Mammary epithelial cell (primary cell): ENCODE measurements at regions of chr11 and their contacts with region 1.

Region 1: GRCh38 chr11:25350899-25351803 is 854.3 kb downstream of the LUZP2 start:
- DNase-seq: no peak
- H3K4me3 ChIP-seq: no peak overlapping the region
- H3K27ac ChIP-seq: no peak overlapping the region
- H3K4me1 ChIP-seq: no peaks in the 10 kb centered on the region
- H3K27me3 ChIP-seq: peaks cover 2% of the 10 kb centered on the region
- CTCF ChIP-seq: no peak

Region 2: GRCh38 chr11:24240496-24241175 is 1110.5 kb before region 1 on chr11:
- CTCF ChIA-PET with region 1: no interaction called
- dilution Hi-C with region 1: no loop called
- in situ Hi-C with region 1: no loop called
- intact Hi-C with region 1: loop called (anchors 10 kb)
- DNase-seq: no peak
- H3K4me3 ChIP-seq: no peak overlapping the region
- H3K27ac ChIP-seq: no peak overlapping the region
- H3K4me1 ChIP-seq: no peaks in the 10 kb centered on the region
- H3K27me3 ChIP-seq: no peaks in the 10 kb centered on the region
- CTCF ChIP-seq: no peak

Region 3: DNA sequence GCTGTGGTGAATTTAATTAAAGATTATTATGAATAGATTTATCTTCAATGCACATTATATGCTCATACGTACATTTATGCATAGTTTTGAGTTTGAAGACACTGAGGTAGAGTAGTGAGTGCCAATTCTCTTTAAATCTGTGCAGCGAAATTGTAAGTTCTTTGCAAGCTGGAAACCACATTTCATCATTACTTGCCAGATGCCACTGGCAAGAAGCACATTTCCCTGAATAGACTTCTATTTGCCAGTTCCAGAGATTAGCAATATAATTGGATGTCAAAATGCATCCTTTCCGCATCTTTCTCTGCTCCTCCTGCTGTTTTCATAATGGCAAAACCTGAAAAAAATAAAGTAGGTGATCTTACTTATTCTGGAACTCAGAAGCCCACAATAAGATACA is 406.3 kb before region 1 on chr11:
- CTCF ChIA-PET with region 1: no interaction called
- dilution Hi-C with region 1: no loop called
- in situ Hi-C with region 1: no loop called
- intact Hi-C with region 1: no loop called
- DNase-seq: no peak
- H3K4me3 ChIP-seq: no peak overlapping the region
- H3K27ac ChIP-seq: no peak overlapping the region
- H3K4me1 ChIP-seq: no peaks in the 10 kb centered on the region
- H3K27me3 ChIP-seq: no peaks in the 10 kb centered on the region
- CTCF ChIP-seq: no peak

Region 4: GRCh38 chr11:25449091-25449490 is 97.9 kb after region 1 on chr11:
- CTCF ChIA-PET with region 1: no interaction called
- dilution Hi-C with region 1: no loop called
- in situ Hi-C with region 1: no loop called
- intact Hi-C with region 1: no loop called
- DNase-seq: no peak
- H3K4me3 ChIP-seq: no peak overlapping the region
- H3K27ac ChIP-seq: no peak overlapping the region
- H3K4me1 ChIP-seq: no peaks in the 10 kb centered on the region
- H3K27me3 ChIP-seq: no peaks in the 10 kb centered on the region
- CTCF ChIP-seq: no peak